Mammary epithelial cell (primary cell): ENCODE measurements at regions of chr9 and their contacts with region 1.

Region 1: DNA sequence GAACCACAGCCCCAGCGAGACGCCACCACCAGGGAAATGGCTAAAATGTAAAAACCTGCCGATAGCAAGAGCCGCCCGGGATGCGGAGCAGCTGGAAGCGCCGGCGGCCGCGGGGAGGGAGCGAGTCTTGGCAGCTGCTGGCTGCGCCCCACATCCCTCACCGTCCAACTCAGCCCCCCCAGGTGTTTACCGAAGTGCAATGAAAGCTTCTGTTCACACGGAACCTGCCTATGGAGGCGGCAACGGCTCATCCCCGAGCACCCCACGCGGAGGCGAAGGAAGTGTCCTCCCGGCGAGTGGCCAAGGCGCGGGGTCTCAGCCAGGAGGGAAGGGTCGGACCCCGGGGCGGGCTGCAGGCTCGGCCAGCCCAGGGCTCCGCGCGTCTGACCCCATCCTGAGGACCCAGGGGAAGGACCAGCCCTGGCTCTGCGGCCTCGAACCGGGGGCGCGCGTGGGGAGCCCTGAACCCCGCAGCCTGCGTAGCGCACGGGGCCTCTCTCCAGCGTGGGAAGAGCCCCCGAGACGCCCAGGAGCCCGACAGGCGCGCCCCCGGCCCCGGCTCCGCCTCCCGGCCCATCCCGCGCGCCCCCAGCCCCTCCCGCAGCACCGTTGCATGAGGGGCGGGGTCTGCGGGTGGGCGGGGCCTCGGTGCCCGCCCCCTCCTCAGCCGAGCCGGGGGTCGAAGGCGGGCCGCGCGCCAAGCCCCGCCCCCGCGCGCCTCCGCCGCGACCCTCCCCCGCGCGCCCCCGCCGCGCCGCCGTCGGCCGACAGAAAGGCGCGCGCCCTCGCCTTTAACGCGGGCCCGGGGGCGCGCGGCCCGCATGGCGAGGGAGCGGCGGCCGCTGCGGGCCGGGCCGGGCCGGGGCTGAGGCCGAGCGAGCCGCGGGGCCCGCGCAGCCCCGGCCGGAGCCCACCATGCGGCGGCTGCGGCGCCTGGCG is at the start of gene DIPK1B:
- DNase-seq: no peak
- H3K4me3 ChIP-seq: no peak within 1 kb of the TSS
- H3K27ac ChIP-seq: no peak within 1 kb of the TSS
- H3K4me1 ChIP-seq: no peaks in the 10 kb centered on the region
- H3K27me3 ChIP-seq: peaks cover 6% of the 10 kb centered on the region
- CTCF ChIP-seq: no peak
- total RNA-seq, gene DIPK1B: 0.35 to 0.50 TPM

Region 2: GRCh38 chr9:136455043-136456002 is 256.7 kb before region 1 on chr9:
- CTCF ChIA-PET with region 1: no interaction called
- dilution Hi-C with region 1: loop called (anchors 5 kb)
- in situ Hi-C with region 1: no loop called
- intact Hi-C with region 1: no loop called
- DNase-seq: no peak
- H3K4me3 ChIP-seq: no peak overlapping the region
- H3K27ac ChIP-seq: no peak overlapping the region
- H3K4me1 ChIP-seq: no peaks in the 10 kb centered on the region
- H3K27me3 ChIP-seq: no peaks in the 10 kb centered on the region
- CTCF ChIP-seq: no peak

Region 3: GRCh38 chr9:136558373-136558772 is 153.6 kb before region 1 on chr9:
- CTCF ChIA-PET with region 1: no interaction called
- dilution Hi-C with region 1: loop called (anchors 5 kb)
- in situ Hi-C with region 1: no loop called
- intact Hi-C with region 1: no loop called
- DNase-seq: peak; percentile 49
- H3K4me3 ChIP-seq: no peak overlapping the region
- H3K27ac ChIP-seq: no peak overlapping the region
- H3K4me1 ChIP-seq: peaks cover 6% of the 10 kb centered on the region
- H3K27me3 ChIP-seq: no peaks in the 10 kb centered on the region
- CTCF ChIP-seq: no peak

Region 4: GRCh38 chr9:136614372-136614922 is 97.6 kb before region 1 on chr9:
- CTCF ChIA-PET with region 1: no interaction called
- dilution Hi-C with region 1: loop called (anchors 5 kb)
- in situ Hi-C with region 1: no loop called
- intact Hi-C with region 1: no loop called
- DNase-seq: no peak
- H3K4me3 ChIP-seq: no peak overlapping the region
- H3K27ac ChIP-seq: no peak overlapping the region
- H3K4me1 ChIP-seq: peaks cover 17% of the 10 kb centered on the region
- H3K27me3 ChIP-seq: no peaks in the 10 kb centered on the region
- CTCF ChIP-seq: no peak

Region 5: DNA sequence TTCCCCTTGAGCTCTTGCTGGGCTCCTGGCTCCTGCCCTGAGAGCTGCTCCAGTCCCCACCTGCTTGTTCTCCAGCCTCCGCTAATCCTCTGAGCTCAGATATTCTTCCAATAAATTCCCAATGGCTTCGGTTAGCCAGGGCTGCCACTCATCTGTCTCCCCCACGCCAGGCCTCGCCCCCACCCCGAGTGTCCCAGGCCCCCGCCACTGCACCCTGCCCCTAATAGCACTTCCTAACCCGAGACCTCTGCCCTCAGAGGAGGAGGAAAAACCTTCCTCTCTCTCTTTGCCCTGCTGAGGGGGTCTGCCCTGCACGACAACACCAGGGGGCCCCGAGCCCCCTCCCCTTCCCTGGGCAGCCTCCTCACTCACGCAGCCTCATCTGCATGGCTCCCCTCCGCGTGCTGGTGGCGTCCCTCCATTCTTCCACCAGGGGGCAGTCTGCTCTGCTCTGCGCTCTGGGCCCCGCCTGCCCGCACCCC is 57.7 kb after region 1 on chr9:
- CTCF ChIA-PET with region 1: no interaction called
- dilution Hi-C with region 1: loop called (anchors 5 kb)
- in situ Hi-C with region 1: no loop called
- intact Hi-C with region 1: no loop called
- DNase-seq: no peak
- H3K4me3 ChIP-seq: no peak overlapping the region
- H3K27ac ChIP-seq: no peak overlapping the region
- H3K4me1 ChIP-seq: peaks cover under 1% of the 10 kb centered on the region
- H3K27me3 ChIP-seq: no peaks in the 10 kb centered on the region
- CTCF ChIP-seq: peak; percentile 32 to 63

Region 6: GRCh38 chr9:136790927-136791641 is 79.1 kb after region 1 on chr9 and contains the start of gene TMEM141:
- CTCF ChIA-PET with region 1: no interaction called
- dilution Hi-C with region 1: no loop called
- in situ Hi-C with region 1: no loop called
- intact Hi-C with region 1: no loop called
- DNase-seq: peak; percentile 98
- H3K4me3 ChIP-seq: peak within 1 kb of the TSS; percentile 72 to 93 (median 77)
- H3K27ac ChIP-seq: peak within 1 kb of the TSS; percentile 88
- H3K4me1 ChIP-seq: peaks cover 18% of the 10 kb centered on the region
- H3K27me3 ChIP-seq: no peaks in the 10 kb centered on the region
- CTCF ChIP-seq: no peak
- total RNA-seq, gene TMEM141: 38.8 to 95.4 TPM